IMR-90 (cell line): ENCODE measurements at regions of chr17 and their contacts with region 1.

Region 1: DNA sequence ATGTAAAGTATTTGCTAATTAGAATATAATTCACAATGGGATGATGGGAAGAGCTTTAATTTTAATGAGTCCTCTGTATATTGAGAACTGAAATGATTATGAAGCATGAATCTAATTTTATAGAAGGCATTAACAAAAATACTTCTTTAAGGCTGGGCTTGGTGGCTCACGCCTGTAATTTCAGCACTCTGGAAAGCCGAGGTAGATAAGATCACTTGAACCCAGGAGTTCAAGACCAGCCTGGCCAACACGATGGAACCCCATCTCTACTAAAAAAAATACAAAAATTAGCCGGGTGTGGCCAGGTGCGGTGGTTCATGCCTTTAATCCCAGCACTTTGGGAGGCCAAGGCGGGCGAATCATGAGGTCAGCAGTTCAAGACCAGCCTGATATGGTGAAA is 12.0 kb downstream of the CDK12 start:
- DNase-seq: no peak
- ATAC-seq: no peak
- H3K4me3 ChIP-seq: no peak overlapping the region
- H3K27ac ChIP-seq: no peak overlapping the region
- H3K4me1 ChIP-seq: no peaks in the 10 kb centered on the region
- H3K27me3 ChIP-seq: no peaks in the 10 kb centered on the region
- CTCF ChIP-seq: no peak
- POLR2A ChIP-seq: no peak
- RAD21 ChIP-seq: no peak

Region 2: GRCh38 chr17:39194089-39194984 is 279.0 kb before region 1 on chr17:
- CTCF ChIA-PET with region 1: no interaction called
- POLR2A ChIA-PET with region 1: no interaction called
- dilution Hi-C with region 1: no loop called
- in situ Hi-C with region 1: no loop called
- intact Hi-C with region 1: no loop called
- DNase-seq: peak; percentile 67
- ATAC-seq: peak; percentile 47
- H3K4me3 ChIP-seq: no peak overlapping the region
- H3K27ac ChIP-seq: no peak overlapping the region
- H3K4me1 ChIP-seq: peaks cover 19% of the 10 kb centered on the region
- H3K27me3 ChIP-seq: no peaks in the 10 kb centered on the region
- CTCF ChIP-seq: peak; percentile 62
- POLR2A ChIP-seq: no peak
- RAD21 ChIP-seq: peak; percentile 61

Region 3: DNA sequence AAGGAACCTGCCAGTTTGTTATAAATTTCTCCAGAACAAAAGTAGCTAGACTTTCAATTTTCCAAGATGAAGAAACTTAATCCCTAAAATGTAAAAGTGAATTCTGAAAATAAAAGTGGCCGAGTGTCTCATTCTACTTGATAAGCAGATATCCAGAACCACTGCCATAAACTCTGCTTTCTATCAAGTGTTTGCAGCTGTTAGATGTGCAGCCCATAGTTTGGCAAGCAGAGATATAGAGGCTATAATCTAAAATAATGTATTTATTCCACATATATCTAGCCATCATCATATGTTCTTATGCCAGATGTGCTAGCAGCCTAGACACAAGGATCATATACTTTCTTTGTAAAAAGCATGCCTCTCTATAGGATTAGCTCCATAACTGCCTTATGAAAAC is 57.2 kb before region 1 on chr17:
- CTCF ChIA-PET with region 1: interaction called, 4 read pairs
- POLR2A ChIA-PET with region 1: interaction called, 15 read pairs
- dilution Hi-C with region 1: no loop called
- in situ Hi-C with region 1: no loop called
- intact Hi-C with region 1: no loop called
- DNase-seq: no peak
- ATAC-seq: no peak
- H3K4me3 ChIP-seq: no peak overlapping the region
- H3K27ac ChIP-seq: no peak overlapping the region
- H3K4me1 ChIP-seq: no peaks in the 10 kb centered on the region
- H3K27me3 ChIP-seq: no peaks in the 10 kb centered on the region
- CTCF ChIP-seq: no peak
- POLR2A ChIP-seq: no peak
- RAD21 ChIP-seq: no peak

Region 4: GRCh38 chr17:39634384-39634871 is 161.1 kb after region 1 on chr17:
- CTCF ChIA-PET with region 1: no interaction called
- POLR2A ChIA-PET with region 1: no interaction called
- dilution Hi-C with region 1: no loop called
- in situ Hi-C with region 1: no loop called
- intact Hi-C with region 1: no loop called
- DNase-seq: peak; percentile 44
- ATAC-seq: peak; percentile 28; the same call in 1 of the 2 replicates
- H3K4me3 ChIP-seq: no peak overlapping the region
- H3K27ac ChIP-seq: no peak overlapping the region
- H3K4me1 ChIP-seq: peaks cover 15% of the 10 kb centered on the region
- H3K27me3 ChIP-seq: peaks cover 31% of the 10 kb centered on the region
- CTCF ChIP-seq: peak; percentile 73
- POLR2A ChIP-seq: no peak
- RAD21 ChIP-seq: peak; percentile 36

Region 5: DNA sequence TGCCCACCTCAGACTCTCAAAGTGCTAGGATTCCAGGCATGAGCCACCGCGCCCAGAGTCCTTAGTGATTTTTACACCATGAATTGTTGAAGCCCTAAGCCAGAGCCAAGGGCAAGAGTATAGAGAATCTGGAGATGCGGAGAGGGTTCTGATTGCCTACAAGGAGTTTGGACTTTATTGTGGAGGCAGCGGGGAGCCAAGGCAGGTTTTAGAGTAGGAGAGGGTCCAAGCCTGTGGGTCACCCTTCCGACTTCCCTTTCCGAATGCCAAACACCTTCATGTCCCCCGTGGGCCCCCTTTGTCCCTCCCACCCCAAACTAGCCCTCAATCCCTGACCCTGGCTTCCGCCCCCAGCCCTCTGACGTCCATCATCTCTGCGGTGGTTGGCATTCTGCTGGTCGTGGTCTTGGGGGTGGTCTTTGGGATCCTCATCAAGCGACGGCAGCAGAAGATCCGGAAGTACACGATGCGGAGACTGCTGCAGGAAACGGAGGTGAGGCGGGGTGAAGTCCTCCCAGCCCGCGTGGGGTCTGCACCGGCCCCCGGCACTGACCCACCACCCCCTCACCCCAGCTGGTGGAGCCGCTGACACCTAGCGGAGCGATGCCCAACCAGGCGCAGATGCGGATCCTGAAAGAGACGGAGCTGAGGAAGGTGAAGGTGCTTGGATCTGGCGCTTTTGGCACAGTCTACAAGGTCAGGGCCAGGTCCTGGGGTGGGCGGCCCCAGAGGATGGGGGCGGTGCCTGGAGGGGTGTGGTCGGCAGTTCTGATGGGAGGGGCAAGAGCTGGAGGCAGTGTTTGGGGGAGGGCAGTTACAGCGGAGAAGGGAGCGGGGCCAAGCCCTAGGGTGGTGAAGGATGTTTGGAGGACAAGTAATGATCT is 249.9 kb after region 1 on chr17:
- CTCF ChIA-PET with region 1: no interaction called
- POLR2A ChIA-PET with region 1: no interaction called
- dilution Hi-C with region 1: no loop called
- in situ Hi-C with region 1: no loop called
- intact Hi-C with region 1: no loop called
- DNase-seq: no peak
- ATAC-seq: no peak
- H3K4me3 ChIP-seq: no peak overlapping the region
- H3K27ac ChIP-seq: no peak overlapping the region
- H3K4me1 ChIP-seq: no peaks in the 10 kb centered on the region
- H3K27me3 ChIP-seq: no peaks in the 10 kb centered on the region
- CTCF ChIP-seq: no peak
- POLR2A ChIP-seq: no peak
- RAD21 ChIP-seq: no peak